B cell (primary cell): ENCODE measurements at regions of chr22 and their contacts with region 1.

Region 1: DNA sequence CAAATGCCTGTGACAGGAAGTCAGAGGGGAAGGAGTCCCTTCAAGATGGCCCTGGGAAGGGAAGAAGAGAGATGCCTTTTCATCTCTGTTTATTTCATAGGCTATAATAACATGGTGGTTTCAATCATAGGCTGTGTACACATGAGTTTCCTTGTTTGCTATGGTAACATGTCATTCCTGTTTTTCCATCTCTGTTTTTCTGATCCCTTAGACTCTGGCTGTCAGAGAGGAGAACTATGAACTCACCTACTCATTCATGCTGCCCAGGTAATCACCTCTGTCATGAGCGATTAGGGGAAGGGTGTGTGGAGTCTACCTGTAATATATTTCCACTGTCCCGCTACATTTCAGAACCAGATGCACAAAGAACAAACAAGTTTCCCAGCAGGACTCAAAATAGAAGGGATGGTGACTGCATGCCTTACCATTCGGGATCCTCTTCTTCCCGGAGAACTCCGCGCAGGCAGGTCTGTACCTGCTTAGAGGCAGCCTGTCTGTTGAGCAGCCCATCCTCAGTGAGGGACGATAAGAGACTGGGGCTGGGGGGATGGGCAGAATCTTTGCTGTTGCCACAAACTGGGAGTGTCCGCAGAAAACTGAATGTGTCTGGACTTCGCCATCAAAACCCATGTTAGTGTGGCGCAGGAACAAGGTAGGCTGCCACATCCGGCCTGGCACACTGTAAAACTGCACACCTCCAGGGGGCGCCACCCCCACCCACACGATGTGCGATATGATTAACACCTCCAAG is 7.1 kb upstream of the PEX26 start:
- DNase-seq: no peak
- ATAC-seq: no peak
- H3K4me3 ChIP-seq: no peak overlapping the region
- H3K4me3 Mint-ChIP-seq: peak overlapping the region; percentile 60
- H3K27ac ChIP-seq: no peak overlapping the region
- H3K27ac Mint-ChIP-seq: peak overlapping the region; percentile 65
- H3K4me1 ChIP-seq: peaks cover 58 to 66% of the 10 kb centered on the region in 2 donors
- H3K4me1 Mint-ChIP-seq: peaks cover 67% of the 10 kb centered on the region
- H3K27me3 ChIP-seq: no peaks in the 10 kb centered on the region
- H3K27me3 Mint-ChIP-seq: no peaks in the 10 kb centered on the region
- CTCF ChIP-seq: no peak

Region 2: DNA sequence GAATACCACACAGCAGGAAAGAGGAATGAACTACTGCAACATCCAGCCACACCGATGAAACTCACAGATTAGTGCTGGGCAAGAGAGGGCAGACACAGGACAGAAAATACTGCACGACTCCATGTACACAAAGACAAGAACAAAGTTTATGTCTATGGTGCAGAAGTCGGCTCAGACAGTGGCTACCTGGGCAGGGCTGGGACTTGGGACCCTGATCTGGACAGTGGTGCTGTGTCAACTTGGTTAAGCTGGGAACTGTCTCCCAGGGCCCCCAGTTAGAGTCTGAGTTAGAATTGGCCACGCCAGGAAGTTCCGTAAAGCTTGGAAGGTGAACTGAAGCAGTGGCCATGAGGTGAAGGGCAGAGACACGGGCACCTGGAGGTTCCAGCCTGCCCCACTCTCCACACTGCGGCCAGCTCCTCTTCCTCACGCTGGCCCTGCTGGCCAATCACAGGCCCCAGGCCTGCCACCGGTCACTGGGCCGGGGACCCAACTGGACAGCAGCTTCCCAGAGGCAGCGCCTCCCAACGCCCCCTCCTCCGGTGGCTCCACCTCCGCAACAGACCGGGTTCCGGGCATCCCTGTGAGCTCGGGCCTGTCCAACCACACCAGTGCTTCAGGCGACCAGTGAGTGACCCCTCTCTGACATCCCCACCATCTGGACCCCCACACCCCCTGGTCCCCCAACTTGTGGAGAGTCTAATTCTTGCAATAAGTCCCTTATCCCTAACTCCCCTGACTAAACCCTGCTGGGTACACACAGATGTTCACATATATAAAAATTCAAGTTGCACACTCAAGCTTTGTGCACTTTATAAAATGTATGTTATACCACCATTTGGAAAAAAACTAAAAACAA is 140.0 kb before region 1 on chr22:
- CTCF ChIA-PET with region 1: no interaction called
- POLR2A ChIA-PET with region 1: no interaction called
- intact Hi-C with region 1: no loop called
- DNase-seq: no peak
- ATAC-seq: no peak
- H3K4me3 ChIP-seq: no peak overlapping the region
- H3K4me3 Mint-ChIP-seq: no peak overlapping the region
- H3K27ac ChIP-seq: no peak overlapping the region
- H3K27ac Mint-ChIP-seq: no peak overlapping the region
- H3K4me1 ChIP-seq: peaks cover 29 to 31% of the 10 kb centered on the region in 2 donors
- H3K4me1 Mint-ChIP-seq: peaks cover 87% of the 10 kb centered on the region
- H3K27me3 ChIP-seq: no peaks in the 10 kb centered on the region
- H3K27me3 Mint-ChIP-seq: no peaks in the 10 kb centered on the region
- CTCF ChIP-seq: no peak

Region 3: GRCh38 chr22:18057568-18058209 is 13.0 kb before region 1 on chr22:
- CTCF ChIA-PET with region 1: interaction called, 82 read pairs
- POLR2A ChIA-PET with region 1: interaction called, 28 read pairs
- intact Hi-C with region 1: loop called (anchors 1 kb)
- DNase-seq: peak; percentile 93
- ATAC-seq: peak; percentile 81
- H3K4me3 ChIP-seq: peak overlapping the region in 4 of 5 experiments; percentile 27 to 47 (median 38)
- H3K4me3 Mint-ChIP-seq: peak overlapping the region; percentile 86
- H3K27ac ChIP-seq: peak overlapping the region; percentile 97 to 99
- H3K27ac Mint-ChIP-seq: peak overlapping the region; percentile 99
- H3K4me1 ChIP-seq: peaks cover 30 to 43% of the 10 kb centered on the region in 2 donors
- H3K4me1 Mint-ChIP-seq: peaks cover 41% of the 10 kb centered on the region
- H3K27me3 ChIP-seq: no peaks in the 10 kb centered on the region
- H3K27me3 Mint-ChIP-seq: no peaks in the 10 kb centered on the region
- CTCF ChIP-seq: no peak

Region 4: GRCh38 chr22:18130018-18130417 is 59.3 kb after region 1 on chr22:
- CTCF ChIA-PET with region 1: no interaction called
- POLR2A ChIA-PET with region 1: no interaction called
- intact Hi-C with region 1: no loop called
- DNase-seq: no peak
- ATAC-seq: no peak
- H3K4me3 ChIP-seq: no peak overlapping the region
- H3K4me3 Mint-ChIP-seq: no peak overlapping the region
- H3K27ac ChIP-seq: no peak overlapping the region
- H3K27ac Mint-ChIP-seq: no peak overlapping the region
- H3K4me1 ChIP-seq: no peaks in the 10 kb centered on the region
- H3K4me1 Mint-ChIP-seq: no peaks in the 10 kb centered on the region
- H3K27me3 ChIP-seq: no peaks in the 10 kb centered on the region
- H3K27me3 Mint-ChIP-seq: no peaks in the 10 kb centered on the region
- CTCF ChIP-seq: no peak

Region 5: DNA sequence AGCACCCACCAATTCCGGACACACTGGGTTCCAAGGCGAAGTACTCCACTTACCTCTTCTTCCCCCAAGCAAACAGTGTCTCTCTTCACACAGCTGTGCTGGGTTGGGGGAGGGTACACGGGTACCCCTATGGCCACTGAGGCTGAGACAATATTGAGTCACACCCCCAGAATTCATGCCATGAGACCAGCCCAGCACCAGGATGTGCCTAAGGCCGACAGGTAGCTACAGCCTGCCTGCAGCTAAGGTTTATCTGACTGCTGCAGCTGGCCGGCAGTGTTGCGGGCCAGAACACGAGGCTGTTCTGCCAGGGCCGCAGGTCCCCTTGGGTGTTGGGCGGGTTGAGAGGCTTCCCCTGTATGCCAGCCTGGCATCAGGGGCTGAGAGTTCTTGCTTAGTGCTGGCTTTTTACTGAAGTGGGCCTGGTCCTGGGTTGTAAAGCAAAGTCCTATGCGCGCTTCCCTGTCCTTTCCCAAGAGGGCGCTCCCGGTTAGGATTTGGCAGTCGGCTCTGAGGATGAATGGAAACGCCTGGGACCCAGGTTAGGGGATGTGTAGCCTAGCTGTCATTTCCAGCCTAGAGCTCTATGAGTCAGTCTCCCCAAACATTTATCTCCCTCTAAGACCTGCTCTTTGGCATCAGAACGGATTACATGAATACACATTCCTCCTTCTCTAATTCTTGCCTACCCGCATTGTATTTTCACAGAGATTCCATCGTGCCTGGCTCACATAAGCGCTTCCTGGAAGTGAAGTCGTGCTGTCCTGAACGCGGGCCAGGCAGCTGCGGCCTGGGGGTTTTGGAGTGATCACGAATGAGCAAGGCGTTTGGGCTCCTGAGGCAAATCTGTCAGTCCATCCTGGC is 86.4 kb after region 1 on chr22:
- CTCF ChIA-PET with region 1: no interaction called
- POLR2A ChIA-PET with region 1: no interaction called
- intact Hi-C with region 1: no loop called
- DNase-seq: no peak
- ATAC-seq: no peak
- H3K4me3 ChIP-seq: no peak overlapping the region
- H3K4me3 Mint-ChIP-seq: no peak overlapping the region
- H3K27ac ChIP-seq: no peak overlapping the region
- H3K27ac Mint-ChIP-seq: no peak overlapping the region
- H3K4me1 ChIP-seq: no peaks in the 10 kb centered on the region
- H3K4me1 Mint-ChIP-seq: peaks cover 4% of the 10 kb centered on the region
- H3K27me3 ChIP-seq: no peaks in the 10 kb centered on the region
- H3K27me3 Mint-ChIP-seq: no peaks in the 10 kb centered on the region
- CTCF ChIP-seq: no peak